A549 (cell line): ENCODE measurements at regions of chr6 and their contacts with region 1.

Region 1: GRCh38 chr6:28838634-28839442 is 84.9 kb downstream of the TRIM27 start:
- DNase-seq: peak; percentile 67 to 88
- ATAC-seq: peak; percentile 90 to 91
- H3K4me3 ChIP-seq: peak overlapping the region; percentile 71
- H3K27ac ChIP-seq: peak overlapping the region; percentile 70 to 86
- H3K4me1 ChIP-seq: peaks cover 6% of the 10 kb centered on the region; the same call in 1 of the 3 replicates
- CTCF ChIP-seq: peak; percentile 56
- EP300 ChIP-seq: no peak
- POLR2A ChIP-seq: no peak
- RAD21 ChIP-seq: peak in 1 of 2 experiments; percentile 19; a peak in 1 of 5 replicates

Region 2: DNA sequence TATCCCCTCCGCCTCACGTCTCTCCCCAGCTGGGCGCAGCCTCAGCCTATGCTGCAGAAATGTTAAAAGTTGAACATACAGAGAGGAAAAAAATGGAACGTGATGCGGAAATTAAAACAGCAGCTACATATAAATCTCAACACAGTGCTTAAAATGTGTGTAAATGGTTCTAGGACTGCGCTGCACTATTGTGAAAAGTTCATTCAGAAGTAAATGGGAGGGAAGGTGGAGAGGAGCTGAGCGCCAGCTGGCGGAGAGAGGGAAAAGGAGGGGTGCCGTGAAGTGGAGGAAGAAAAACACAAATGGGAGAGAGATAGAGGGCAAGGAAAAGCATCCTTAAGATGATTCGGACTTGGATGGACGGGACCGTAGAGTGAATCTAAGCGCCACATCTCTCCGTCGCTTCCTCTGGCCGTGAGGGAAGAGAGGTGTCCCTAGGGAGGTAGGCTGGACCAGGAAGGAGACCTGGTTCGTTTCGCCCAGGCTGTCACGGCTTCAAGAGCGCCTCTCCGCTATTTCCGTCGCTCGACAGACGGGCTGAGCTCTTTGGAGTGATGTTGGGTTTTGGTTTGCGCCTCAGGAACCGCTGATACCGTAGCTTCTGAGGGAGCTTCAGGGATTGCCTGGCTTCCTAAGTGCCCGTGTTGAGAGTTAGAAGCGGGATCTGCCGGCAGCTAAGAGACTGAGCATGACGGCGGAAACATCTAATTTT is 28.7 kb before region 1 on chr6:
- CTCF ChIA-PET with region 1: interaction called, 14 read pairs
- POLR2A ChIA-PET with region 1: no interaction called
- DNase-seq: peak in 1 of 2 experiments; percentile 57
- ATAC-seq: peak; percentile 73 to 78
- H3K4me3 ChIP-seq: peak overlapping the region; percentile 61
- H3K27ac ChIP-seq: no peak overlapping the region
- H3K4me1 ChIP-seq: peaks cover 11% of the 10 kb centered on the region; the same call in 1 of the 3 replicates
- CTCF ChIP-seq: peak; percentile 41; the same call in 2 of the 3 replicates
- EP300 ChIP-seq: no peak
- POLR2A ChIP-seq: no peak
- RAD21 ChIP-seq: peak; percentile 32 to 37; a peak in 3 of 5 replicates

Region 3: GRCh38 chr6:28824793-28825731 is 13.8 kb before region 1 on chr6:
- CTCF ChIA-PET with region 1: interaction called, 24 read pairs
- POLR2A ChIA-PET with region 1: no interaction called
- DNase-seq: no peak
- ATAC-seq: peak in 1 of 2 experiments; percentile 40; a peak in 1 of 6 replicates
- H3K4me3 ChIP-seq: 0 out of 3 replicates have a peak overlapping the region, but pooled peaks have one; percentile 5
- H3K27ac ChIP-seq: no peak overlapping the region
- H3K4me1 ChIP-seq: no peaks in the 10 kb centered on the region
- CTCF ChIP-seq: no peak
- EP300 ChIP-seq: no peak
- POLR2A ChIP-seq: no peak
- RAD21 ChIP-seq: no peak

Region 4: DNA sequence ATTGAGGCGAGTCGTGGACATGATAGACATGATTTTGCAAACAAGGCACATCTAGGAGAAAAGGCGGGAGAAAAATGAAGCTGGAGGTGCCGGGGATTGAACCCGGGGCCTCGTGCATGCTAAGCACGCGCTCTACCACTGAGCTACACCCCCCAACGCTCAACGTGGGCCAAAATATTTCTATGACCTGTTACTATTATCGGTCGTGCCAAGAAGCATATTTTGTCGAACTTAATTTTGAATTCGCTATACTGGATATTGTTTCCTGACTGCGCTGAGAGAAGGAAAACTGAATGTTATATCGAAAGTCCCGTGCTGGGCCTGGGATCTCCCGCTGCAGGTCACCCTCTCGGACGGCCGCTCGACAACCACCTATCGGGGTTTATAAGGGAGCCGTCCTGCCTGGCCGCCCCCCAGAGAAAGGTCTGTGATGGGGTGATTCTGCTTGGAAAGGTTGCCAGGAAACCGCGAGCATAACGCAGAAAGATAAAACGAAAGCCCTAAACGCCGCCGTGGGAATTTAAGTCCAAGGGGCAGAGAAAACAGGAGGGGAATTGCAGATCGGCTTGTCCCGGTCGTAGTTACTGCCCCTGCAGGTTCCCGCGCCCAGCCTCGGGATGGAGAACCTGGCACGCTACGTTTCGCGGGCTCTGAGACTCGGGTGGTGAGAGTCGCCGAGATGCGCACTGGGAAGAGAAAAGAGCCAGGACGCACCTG is 24.9 kb after region 1 on chr6:
- CTCF ChIA-PET with region 1: interaction called, 83 read pairs
- POLR2A ChIA-PET with region 1: interaction called, 38 read pairs
- DNase-seq: peak in 1 of 2 experiments; percentile 87
- ATAC-seq: peak; percentile 74 to 75
- H3K4me3 ChIP-seq: peak overlapping the region; percentile 71
- H3K27ac ChIP-seq: peak overlapping the region; percentile 70 to 80
- H3K4me1 ChIP-seq: peaks cover 3% of the 10 kb centered on the region; the same call in 2 of the 3 replicates
- CTCF ChIP-seq: no peak; the same call in 2 of the 3 replicates
- EP300 ChIP-seq: no peak
- POLR2A ChIP-seq: no peak
- RAD21 ChIP-seq: peak in 1 of 2 experiments; percentile 46; a peak in 2 of 5 replicates

Region 5: DNA sequence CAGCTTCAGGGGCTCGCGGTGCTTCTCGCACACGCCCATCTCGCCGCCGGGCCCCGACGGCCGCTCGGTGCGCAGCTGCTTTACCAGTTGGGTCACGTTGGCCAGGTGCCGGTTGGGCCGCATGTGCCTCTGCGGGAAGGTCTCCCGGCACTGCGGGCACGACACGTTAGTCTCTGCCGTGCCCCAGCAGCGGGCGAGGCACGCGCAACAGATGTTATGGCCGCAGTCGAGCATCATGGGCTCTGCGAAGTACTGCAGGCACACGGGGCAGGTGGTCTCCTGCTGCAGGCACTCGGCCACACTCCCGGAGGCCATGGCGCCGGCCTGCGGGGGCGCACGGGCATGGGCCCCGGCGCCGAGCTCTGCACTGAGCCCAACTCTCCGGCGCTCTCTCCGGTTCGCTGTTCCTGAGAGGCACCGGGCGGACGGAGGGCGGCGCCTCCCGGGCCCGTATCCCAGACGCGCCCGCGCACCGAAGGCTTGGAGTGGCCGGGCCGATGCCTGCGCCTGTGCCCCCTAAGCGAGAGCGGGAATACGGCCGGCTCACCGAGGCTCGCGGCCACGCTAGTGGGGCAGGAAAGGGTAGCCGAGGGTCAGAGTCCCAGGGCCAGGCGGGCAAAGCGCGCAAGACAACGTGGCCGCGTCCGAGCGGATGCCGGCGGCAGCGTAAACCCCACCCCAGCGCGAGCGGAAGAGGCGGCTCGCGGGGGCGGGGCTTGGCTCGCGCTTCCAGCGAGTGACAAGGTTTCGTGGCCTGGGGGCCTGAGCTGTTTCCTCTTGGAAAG is 84.7 kb after region 1 on chr6 and contains the start of gene TRIM27:
- CTCF ChIA-PET with region 1: interaction called, 5 read pairs
- POLR2A ChIA-PET with region 1: interaction called, 10 read pairs
- DNase-seq: peak; percentile 75 to 85
- ATAC-seq: peak; percentile 92 to 95
- H3K4me3 ChIP-seq: peak within 1 kb of the TSS; percentile 97
- H3K27ac ChIP-seq: peak within 1 kb of the TSS; percentile 96 to 99
- H3K4me1 ChIP-seq: peaks cover 17% of the 10 kb centered on the region
- CTCF ChIP-seq: no peak
- EP300 ChIP-seq: no peak
- POLR2A ChIP-seq: peak; percentile 91
- RAD21 ChIP-seq: no peak
- polyA plus RNA-seq, gene TRIM27: 50.1 and 51.4 TPM in 2 replicates

Region 6: DNA sequence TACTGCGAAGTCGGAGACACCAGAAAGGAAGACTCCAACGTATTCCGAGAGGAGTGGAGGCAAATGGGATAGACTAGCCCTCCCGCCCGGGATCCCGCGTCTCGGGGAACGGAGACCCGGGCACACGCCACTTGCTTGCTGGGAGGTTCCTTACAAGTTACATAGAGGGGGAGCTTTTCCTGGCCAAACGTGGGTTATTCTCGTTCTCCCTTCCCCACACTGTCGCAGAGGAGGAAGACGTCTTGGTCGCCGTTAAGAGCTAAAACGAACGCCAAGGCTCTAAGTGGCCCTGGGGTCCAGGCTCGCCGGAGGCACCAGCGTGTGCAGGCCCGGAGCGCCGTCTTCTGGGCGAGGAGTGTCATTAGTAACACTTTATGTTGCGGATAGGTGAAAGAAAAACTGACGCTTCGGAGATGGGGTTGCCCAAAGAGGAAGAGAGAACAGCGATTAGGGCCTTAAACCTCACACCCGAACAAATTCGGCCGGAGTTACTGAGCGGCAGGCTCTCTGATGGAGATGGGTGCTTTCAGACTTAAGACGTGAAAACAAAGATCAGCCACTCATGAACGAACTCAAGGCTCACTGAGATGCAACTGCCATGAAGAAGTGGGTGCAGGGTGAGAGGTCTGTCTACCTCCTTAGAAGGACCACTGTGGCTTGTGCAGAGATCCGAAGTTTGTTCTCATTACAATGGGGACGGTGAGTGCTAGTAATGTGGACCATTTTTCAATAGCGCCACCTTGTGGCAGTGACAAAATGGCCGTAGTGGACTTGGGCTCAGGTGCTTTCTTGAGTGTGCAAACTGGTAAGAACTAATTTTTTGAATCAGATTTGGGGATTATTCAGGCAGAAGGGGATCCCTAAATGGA is 178.0 kb after region 1 on chr6:
- CTCF ChIA-PET with region 1: interaction called, 18 read pairs
- POLR2A ChIA-PET with region 1: interaction called, 4 read pairs
- DNase-seq: peak; percentile 46 to 83
- ATAC-seq: peak; percentile 93 to 94
- H3K4me3 ChIP-seq: peak overlapping the region; percentile 85
- H3K27ac ChIP-seq: peak overlapping the region; percentile 63 to 83
- H3K4me1 ChIP-seq: no peaks in the 10 kb centered on the region
- CTCF ChIP-seq: peak; percentile 67; the same call in 2 of the 3 replicates
- EP300 ChIP-seq: no peak
- POLR2A ChIP-seq: no peak
- RAD21 ChIP-seq: peak; percentile 67 to 74